Activated T-helper 1 cell treated with anti-CD3 and anti-CD28 coated beads, Interleukin-12 subunit alpha, Interleukin-12 subunit beta, Interleukin-2, Interleukin-4 antibody, amounts not matched to agents 30 ng/mL and 10 ng/mL and 1 ng/mL, durations not matched to agents 14 hours and 24 hours and 36 hours (primary cell): ENCODE measurements at regions of chr1 and their contacts with region 1.

Region 1: DNA sequence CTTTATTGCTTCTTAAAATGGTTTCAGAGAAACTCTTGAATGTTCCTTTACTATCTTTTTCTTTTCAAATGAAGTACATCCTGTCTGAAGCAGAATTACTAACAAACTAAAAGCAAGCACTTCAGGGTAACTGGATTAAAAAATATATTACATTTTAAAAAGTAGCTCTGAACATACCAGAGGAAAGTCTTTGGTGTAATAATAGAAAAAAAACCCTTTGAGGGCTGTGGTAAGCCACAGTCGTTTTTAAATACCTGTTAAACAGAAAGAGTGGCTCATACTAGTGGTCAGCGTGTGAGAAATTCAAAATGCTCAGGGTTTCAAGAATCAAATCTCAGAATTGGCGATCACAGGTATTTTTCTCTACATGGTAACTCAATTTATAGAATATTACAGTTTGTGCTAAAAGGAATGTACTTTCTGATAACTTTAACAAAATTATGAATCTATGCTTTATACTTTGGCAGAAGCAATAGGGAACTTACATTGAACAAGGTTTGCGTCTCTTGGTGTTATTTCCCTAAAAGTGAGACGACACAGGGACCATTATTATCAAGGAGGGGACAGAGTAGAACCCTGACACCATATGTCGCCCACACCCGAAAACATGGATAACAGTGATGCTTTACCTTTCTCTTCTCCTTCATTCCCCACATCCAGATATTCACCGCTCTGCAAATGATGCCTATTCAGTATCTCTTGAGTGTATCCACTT is 97.0 kb upstream of the DPH5 start:
- DNase-seq: no peak
- H3K4me3 Mint-ChIP-seq: peak overlapping the region; percentile 23
- H3K27ac Mint-ChIP-seq: peak overlapping the region; percentile 11
- H3K4me1 Mint-ChIP-seq: peaks cover 39% of the 10 kb centered on the region
- H3K27me3 Mint-ChIP-seq: peaks cover 4% of the 10 kb centered on the region

Region 2: DNA sequence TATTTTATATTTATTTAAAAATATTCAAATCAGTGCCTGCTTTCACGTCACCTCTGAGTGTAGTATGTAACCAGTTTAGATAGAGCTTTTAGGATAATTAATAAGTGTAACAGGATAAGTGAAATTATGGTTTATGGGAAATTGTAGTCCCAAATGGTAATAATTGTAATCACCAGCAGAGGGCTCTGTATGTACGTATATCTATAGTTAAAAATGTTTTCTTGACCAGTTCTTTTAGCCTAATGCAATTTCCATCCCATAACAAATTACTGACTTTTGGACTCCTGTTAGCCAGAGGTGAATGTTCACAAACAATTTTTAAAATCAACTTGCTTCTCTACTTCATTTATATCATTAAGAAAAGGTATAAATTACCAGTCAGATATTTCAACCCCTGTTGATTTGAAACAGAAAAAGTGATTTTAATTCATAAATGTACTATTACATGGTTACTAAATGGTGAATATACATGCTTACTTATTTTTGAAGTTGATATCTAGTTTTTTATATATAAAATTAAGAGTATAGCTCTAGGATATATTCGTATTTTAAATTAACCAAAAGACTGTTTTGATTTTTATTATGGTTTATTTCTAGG is 201.4 kb before region 1 on chr1:
- intact Hi-C with region 1: loop called (anchors 5 kb)
- DNase-seq: no peak
- H3K4me3 Mint-ChIP-seq: no peak overlapping the region
- H3K27ac Mint-ChIP-seq: no peak overlapping the region
- H3K4me1 Mint-ChIP-seq: peaks cover 29% of the 10 kb centered on the region
- H3K27me3 Mint-ChIP-seq: no peaks in the 10 kb centered on the region

Region 3: GRCh38 chr1:101025657-101026504 is 96.7 kb before region 1 on chr1 and contains the start of gene DPH5:
- intact Hi-C with region 1: loop called (anchors 2 kb)
- DNase-seq: peak; percentile 84
- H3K4me3 Mint-ChIP-seq: peak within 1 kb of the TSS; percentile 93
- H3K27ac Mint-ChIP-seq: peak within 1 kb of the TSS; percentile 87
- H3K4me1 Mint-ChIP-seq: peaks cover 58% of the 10 kb centered on the region
- H3K27me3 Mint-ChIP-seq: no peaks in the 10 kb centered on the region
- total RNA-seq, gene DPH5: 31.7 and 32.2 TPM in 2 replicates

Region 4: GRCh38 chr1:101112051-101112780 is 10.4 kb before region 1 on chr1:
- intact Hi-C with region 1: loop called (anchors 1 kb)
- DNase-seq: peak; percentile 59
- H3K4me3 Mint-ChIP-seq: peak overlapping the region; percentile 47
- H3K27ac Mint-ChIP-seq: peak overlapping the region; percentile 77
- H3K4me1 Mint-ChIP-seq: peaks cover 40% of the 10 kb centered on the region
- H3K27me3 Mint-ChIP-seq: no peaks in the 10 kb centered on the region

Region 5: DNA sequence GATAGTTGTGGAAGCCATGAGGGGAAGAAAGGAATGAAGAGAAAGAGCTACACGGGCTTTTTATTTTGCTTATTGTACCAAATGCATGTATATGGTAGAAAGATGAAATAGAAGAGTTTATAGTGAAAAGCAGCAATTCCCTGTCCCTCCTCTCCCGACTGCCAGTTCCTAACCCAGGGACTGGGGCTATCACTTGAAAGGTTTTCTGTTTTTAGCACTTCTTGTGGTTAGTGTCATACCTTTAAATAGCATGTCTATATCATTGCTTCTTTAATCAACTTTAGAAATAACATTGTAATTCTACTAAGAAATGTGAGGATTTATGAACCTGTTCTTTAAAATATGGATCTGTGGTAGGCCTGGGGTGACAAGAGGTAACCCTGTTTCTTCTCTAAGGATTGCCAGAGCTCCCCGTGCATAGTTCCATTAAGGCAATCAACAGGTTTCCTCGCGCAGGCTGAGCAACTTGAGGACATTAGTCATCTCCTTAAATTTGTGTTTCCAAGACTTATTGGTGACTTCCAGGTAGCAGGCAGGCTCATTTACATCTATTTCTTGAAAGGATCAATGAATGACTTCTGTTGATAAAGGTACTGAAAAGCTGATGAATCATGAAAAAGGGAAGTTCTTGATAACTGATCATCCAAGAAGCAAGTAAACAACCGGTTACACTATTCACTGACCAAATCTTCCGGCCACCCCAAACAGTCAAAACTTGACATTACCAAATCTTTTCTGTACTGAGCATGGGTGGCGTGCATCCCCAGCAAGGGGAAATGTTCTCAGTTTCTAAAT is 76.4 kb after region 1 on chr1:
- intact Hi-C with region 1: loop called (anchors 5 kb)
- DNase-seq: no peak
- H3K4me3 Mint-ChIP-seq: peak overlapping the region; percentile 9
- H3K27ac Mint-ChIP-seq: peak overlapping the region; percentile 85
- H3K4me1 Mint-ChIP-seq: peaks cover 35% of the 10 kb centered on the region
- H3K27me3 Mint-ChIP-seq: no peaks in the 10 kb centered on the region

Region 6: GRCh38 chr1:101371259-101371658 is 248.7 kb after region 1 on chr1:
- intact Hi-C with region 1: loop called (anchors 5 kb)
- DNase-seq: peak; percentile 33
- H3K4me3 Mint-ChIP-seq: peak overlapping the region; percentile 40
- H3K27ac Mint-ChIP-seq: no peak overlapping the region
- H3K4me1 Mint-ChIP-seq: peaks cover 12% of the 10 kb centered on the region
- H3K27me3 Mint-ChIP-seq: peaks cover 14% of the 10 kb centered on the region